Natural killer cell (primary cell): ENCODE measurements at regions of chr9 and their contacts with region 1.

Region 1: DNA sequence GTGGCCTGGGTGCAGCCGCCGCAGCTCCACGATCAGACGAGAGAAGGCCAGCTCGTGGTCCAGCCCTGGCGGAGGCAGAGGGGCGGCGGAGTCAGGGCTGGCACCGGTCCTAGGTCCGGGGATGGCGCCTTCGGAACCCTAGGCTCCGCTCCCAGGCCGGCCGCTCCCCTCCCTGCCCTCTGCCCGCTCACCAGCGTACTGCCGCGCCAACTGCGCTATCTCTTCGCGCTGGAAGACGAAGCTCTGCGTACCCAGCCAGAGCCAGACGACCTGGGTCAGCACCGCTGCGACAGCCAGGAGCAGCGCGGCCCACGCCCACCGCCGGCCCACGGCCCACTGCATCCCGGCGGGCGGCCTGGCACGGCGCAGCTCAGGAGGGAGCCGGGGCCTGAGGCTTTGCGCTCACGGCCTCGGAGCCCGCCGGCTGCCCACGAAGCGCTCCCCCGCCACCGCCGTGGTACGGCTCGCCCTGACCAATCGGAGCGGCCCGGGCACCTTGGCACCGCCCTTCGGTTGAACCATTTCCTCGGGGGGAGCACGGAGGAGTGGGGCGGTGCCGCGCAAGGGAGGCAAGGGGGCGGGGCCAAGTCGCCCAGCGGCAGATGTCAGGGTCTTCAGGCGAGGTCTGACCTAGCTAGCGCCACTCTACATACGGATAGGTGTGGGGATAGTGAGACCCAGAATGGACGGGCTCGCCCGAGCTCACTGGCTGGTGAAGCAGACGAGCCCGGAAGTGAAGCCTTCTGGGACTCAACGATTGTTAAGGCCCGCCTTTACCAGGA is at the start of gene SIGMAR1:
- DNase-seq: peak; percentile 95 to 96
- ATAC-seq: peak; percentile 94 to 98 (median 95)
- H3K4me3 ChIP-seq: peak within 1 kb of the TSS; percentile 82
- H3K4me3 Mint-ChIP-seq: peak within 1 kb of the TSS; percentile 92
- H3K27ac ChIP-seq: peak within 1 kb of the TSS; percentile 91
- H3K27ac Mint-ChIP-seq: peak within 1 kb of the TSS; percentile 95 to 98
- H3K4me1 ChIP-seq: peaks cover 30% of the 10 kb centered on the region
- H3K4me1 Mint-ChIP-seq: peaks cover 17 to 38% of the 10 kb centered on the region in 2 donors
- H3K27me3 ChIP-seq: no peaks in the 10 kb centered on the region
- H3K27me3 Mint-ChIP-seq: no peaks in the 10 kb centered on the region
- CTCF ChIP-seq: no peak
- total RNA-seq, gene SIGMAR1: 22.1 to 29.8 (median 23.0) TPM

Region 2: DNA sequence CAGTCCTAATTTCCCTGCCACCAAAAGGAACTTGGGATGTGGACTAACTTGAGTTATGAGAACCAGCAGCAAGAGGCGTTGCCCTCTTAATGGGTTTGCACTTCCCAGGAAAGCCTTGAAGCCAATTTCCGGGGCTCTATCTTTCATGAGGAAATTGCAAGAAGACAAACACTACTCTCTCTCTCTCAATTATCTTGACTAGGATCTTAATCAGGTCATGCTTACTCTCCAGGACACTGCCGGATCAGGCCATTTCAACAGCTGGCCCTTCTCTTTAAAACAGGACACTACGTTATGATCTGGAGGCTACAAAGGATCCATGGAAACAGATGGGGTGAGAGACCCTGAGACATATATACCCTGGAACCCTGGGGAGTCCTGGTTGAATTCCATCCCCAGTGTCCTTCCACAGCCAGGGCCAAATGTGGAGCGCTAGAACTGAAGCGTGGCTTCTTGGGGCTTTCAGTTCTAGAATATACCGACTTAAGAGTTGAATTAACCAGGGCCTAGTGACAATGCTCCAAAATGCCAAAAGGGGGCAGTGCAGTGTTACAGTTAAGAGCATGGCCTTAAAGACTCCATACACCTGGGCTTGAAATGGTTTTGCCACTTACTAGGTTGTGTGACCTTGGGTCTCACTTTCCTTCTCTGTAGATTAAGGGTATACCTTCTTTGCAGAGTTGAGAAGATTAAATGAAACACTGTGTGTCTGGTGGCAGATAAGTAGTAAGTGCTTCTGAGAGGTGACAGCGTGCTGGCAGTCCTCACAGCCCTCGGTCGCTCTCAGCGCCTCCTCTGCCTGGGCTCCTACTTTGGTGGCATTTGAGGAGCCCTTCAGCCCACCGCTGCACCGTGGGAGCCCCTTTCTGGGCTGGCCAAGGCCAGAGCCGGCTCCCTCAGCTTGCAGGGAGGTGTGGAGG is 200.3 kb before region 1 on chr9:
- intact Hi-C with region 1: loop called (anchors 1 kb)
- DNase-seq: peak; percentile 27 to 88
- ATAC-seq: peak; percentile 89 to 93 (median 92)
- H3K4me3 ChIP-seq: no peak overlapping the region
- H3K4me3 Mint-ChIP-seq: no peak overlapping the region
- H3K27ac ChIP-seq: no peak overlapping the region
- H3K27ac Mint-ChIP-seq: no peak overlapping the region
- H3K4me1 ChIP-seq: peaks cover 3% of the 10 kb centered on the region
- H3K4me1 Mint-ChIP-seq: peaks cover 7 to 12% of the 10 kb centered on the region in 2 donors
- H3K27me3 ChIP-seq: no peaks in the 10 kb centered on the region
- H3K27me3 Mint-ChIP-seq: no peaks in the 10 kb centered on the region
- CTCF ChIP-seq: peak; percentile 73

Region 3: DNA sequence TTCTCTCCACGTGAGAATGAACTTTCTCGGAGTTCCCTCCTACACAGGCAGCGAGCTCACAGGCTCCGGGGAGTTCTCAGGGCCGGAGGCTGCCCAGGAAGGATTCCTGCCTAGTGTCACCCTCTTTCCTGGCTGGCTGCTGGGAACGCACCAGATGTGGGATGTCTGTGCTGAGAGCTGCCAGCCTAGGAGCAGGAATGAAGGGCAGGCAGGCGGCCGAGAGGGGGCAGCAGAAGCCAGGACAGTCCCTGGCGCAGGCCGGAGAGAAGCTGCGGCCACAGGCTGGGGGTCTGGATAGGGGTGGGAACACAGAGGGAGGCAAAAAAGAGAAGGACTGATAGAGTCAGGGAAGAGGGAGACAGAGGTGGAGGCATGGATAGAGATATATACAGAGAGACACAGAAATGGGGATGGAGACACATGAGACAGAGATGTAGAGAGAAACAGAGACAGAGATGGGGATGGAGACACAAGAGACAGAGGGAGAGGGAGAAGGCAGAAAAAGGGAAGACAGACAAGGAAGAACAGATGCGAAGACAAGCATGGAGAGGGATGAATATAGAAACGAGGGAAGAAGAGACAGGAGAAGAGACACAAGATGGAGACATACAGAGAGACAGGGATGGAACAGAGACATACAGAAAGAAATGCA is 89.5 kb before region 1 on chr9:
- intact Hi-C with region 1: loop called (anchors 1 kb)
- DNase-seq: peak in 1 of 2 donors; percentile 42
- ATAC-seq: peak in 2 of 3 donors; percentile 54 to 67
- H3K4me3 ChIP-seq: no peak overlapping the region
- H3K4me3 Mint-ChIP-seq: no peak overlapping the region
- H3K27ac ChIP-seq: no peak overlapping the region
- H3K27ac Mint-ChIP-seq: no peak overlapping the region
- H3K4me1 ChIP-seq: no peaks in the 10 kb centered on the region
- H3K4me1 Mint-ChIP-seq: no peaks in the 10 kb centered on the region
- H3K27me3 ChIP-seq: no peaks in the 10 kb centered on the region
- H3K27me3 Mint-ChIP-seq: peaks cover 0 to 13% of the 10 kb centered on the region in 2 donors
- CTCF ChIP-seq: peak; percentile 53

Region 4: DNA sequence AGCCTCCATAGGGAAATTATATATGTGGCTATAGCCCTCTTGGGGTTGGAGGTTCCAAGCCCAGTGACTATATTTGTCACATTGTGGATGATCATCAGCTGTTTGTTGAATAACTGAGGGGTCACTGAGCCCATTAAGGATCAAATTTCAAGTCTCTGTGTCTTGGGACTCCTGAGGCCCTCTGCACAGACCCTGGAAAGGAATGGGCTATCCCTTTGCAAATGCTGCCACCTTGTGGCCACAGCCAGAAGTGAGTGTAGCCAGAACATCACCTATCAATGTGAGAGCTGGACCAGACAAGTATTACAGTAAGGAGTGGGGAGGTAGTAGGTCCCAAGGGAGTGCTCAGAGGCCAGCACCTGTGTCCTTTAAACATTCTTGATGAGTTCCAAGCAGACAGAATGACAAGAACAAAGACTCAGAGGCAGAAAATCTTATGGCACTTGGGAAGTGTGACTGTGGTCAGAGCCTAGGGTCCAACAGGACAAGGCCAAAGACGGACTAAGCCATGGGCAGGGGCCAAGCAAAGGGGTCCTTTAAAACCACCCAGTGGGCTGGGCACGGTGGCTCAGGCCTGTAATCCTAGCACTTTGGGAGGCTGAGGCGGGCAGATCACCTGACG is 33.8 kb before region 1 on chr9:
- intact Hi-C with region 1: loop called (anchors 5 kb)
- DNase-seq: peak; percentile 76 to 88
- ATAC-seq: peak; percentile 82 to 99 (median 95)
- H3K4me3 ChIP-seq: no peak overlapping the region
- H3K4me3 Mint-ChIP-seq: no peak overlapping the region
- H3K27ac ChIP-seq: no peak overlapping the region
- H3K27ac Mint-ChIP-seq: no peak overlapping the region
- H3K4me1 ChIP-seq: no peaks in the 10 kb centered on the region
- H3K4me1 Mint-ChIP-seq: no peaks in the 10 kb centered on the region
- H3K27me3 ChIP-seq: no peaks in the 10 kb centered on the region
- H3K27me3 Mint-ChIP-seq: peaks cover 0 to 6% of the 10 kb centered on the region in 2 donors
- CTCF ChIP-seq: peak; percentile 88

Region 5: GRCh38 chr9:34611829-34612630 is 25.5 kb before region 1 on chr9 and contains the start of gene RPP25L:
- intact Hi-C with region 1: loop called (anchors 1 kb)
- DNase-seq: peak; percentile 91 to 93
- ATAC-seq: peak; percentile 85 to 97 (median 89)
- H3K4me3 ChIP-seq: peak within 1 kb of the TSS; percentile 72
- H3K4me3 Mint-ChIP-seq: peak within 1 kb of the TSS; percentile 92
- H3K27ac ChIP-seq: peak within 1 kb of the TSS; percentile 96
- H3K27ac Mint-ChIP-seq: peak within 1 kb of the TSS; percentile 92 to 96
- H3K4me1 ChIP-seq: peaks cover 24% of the 10 kb centered on the region
- H3K4me1 Mint-ChIP-seq: peaks cover 29 to 36% of the 10 kb centered on the region in 2 donors
- H3K27me3 ChIP-seq: no peaks in the 10 kb centered on the region
- H3K27me3 Mint-ChIP-seq: no peaks in the 10 kb centered on the region
- CTCF ChIP-seq: no peak
- total RNA-seq, gene RPP25L: 9.3 to 15.0 (median 9.8) TPM

Region 6: GRCh38 chr9:34620061-34620994 is 17.2 kb before region 1 on chr9 and contains the start of gene DCTN3:
- intact Hi-C with region 1: loop called (anchors 1 kb)
- DNase-seq: peak; percentile 85 to 97
- ATAC-seq: peak; percentile 97 to 98 (median 97)
- H3K4me3 ChIP-seq: peak within 1 kb of the TSS; percentile 68
- H3K4me3 Mint-ChIP-seq: peak within 1 kb of the TSS; percentile 95
- H3K27ac ChIP-seq: peak within 1 kb of the TSS; percentile 67
- H3K27ac Mint-ChIP-seq: peak within 1 kb of the TSS; percentile 89 to 95
- H3K4me1 ChIP-seq: peaks cover 30% of the 10 kb centered on the region
- H3K4me1 Mint-ChIP-seq: peaks cover 30 to 37% of the 10 kb centered on the region in 2 donors
- H3K27me3 ChIP-seq: peaks cover 35% of the 10 kb centered on the region
- H3K27me3 Mint-ChIP-seq: peaks cover 19 to 26% of the 10 kb centered on the region in 2 donors
- CTCF ChIP-seq: no peak
- total RNA-seq, gene DCTN3: 135 to 171 (median 147) TPM

Region 7: GRCh38 chr9:34665381-34666250 is 28.1 kb after region 1 on chr9:
- intact Hi-C with region 1: loop called (anchors 2 kb)
- DNase-seq: peak; percentile 82 to 97
- ATAC-seq: peak; percentile 85 to 93 (median 86)
- H3K4me3 ChIP-seq: peak overlapping the region; percentile 70
- H3K4me3 Mint-ChIP-seq: peak overlapping the region; percentile 90
- H3K27ac ChIP-seq: peak overlapping the region; percentile 96
- H3K27ac Mint-ChIP-seq: peak overlapping the region; percentile 86 to 92
- H3K4me1 ChIP-seq: peaks cover 24% of the 10 kb centered on the region
- H3K4me1 Mint-ChIP-seq: peaks cover 11 to 26% of the 10 kb centered on the region in 2 donors
- H3K27me3 ChIP-seq: no peaks in the 10 kb centered on the region
- H3K27me3 Mint-ChIP-seq: no peaks in the 10 kb centered on the region
- CTCF ChIP-seq: no peak

Region 8: GRCh38 chr9:34686231-34686630 is 48.7 kb after region 1 on chr9:
- intact Hi-C with region 1: no loop called
- DNase-seq: no peak
- ATAC-seq: no peak
- H3K4me3 ChIP-seq: no peak overlapping the region
- H3K4me3 Mint-ChIP-seq: no peak overlapping the region
- H3K27ac ChIP-seq: no peak overlapping the region
- H3K27ac Mint-ChIP-seq: no peak overlapping the region
- H3K4me1 ChIP-seq: no peaks in the 10 kb centered on the region
- H3K4me1 Mint-ChIP-seq: peaks cover 8 to 10% of the 10 kb centered on the region in 2 donors
- H3K27me3 ChIP-seq: no peaks in the 10 kb centered on the region
- H3K27me3 Mint-ChIP-seq: peaks cover 0 to 3% of the 10 kb centered on the region in 2 donors
- CTCF ChIP-seq: no peak

Region 9: DNA sequence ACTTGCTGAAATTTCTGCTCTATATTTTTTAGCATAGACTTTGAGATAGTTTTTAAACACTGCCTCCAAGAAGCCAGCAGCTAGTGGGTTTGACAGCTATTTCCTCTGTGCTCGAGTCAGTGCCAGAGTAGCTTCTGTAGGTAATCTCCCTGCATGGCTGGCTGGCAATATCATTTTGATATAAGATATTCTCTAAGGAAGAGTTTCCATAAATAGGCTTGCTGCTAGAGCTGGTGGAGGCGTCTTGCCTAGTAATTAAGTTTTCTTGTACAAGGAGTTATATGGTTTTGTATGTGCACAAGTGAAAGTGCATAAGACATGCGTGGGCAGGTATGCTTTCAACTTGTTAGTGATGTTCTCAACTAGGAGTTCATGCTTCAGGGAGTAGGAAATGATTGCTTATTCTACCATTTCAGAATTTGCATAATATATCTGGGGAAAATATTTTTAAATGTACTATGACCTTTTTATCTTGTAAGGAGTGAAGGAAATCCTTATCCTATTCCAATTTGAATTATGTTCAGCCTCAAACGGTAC is 146.5 kb after region 1 on chr9:
- intact Hi-C with region 1: no loop called
- DNase-seq: no peak
- ATAC-seq: no peak
- H3K4me3 ChIP-seq: no peak overlapping the region
- H3K4me3 Mint-ChIP-seq: no peak overlapping the region
- H3K27ac ChIP-seq: no peak overlapping the region
- H3K27ac Mint-ChIP-seq: no peak overlapping the region
- H3K4me1 ChIP-seq: no peaks in the 10 kb centered on the region
- H3K4me1 Mint-ChIP-seq: no peaks in the 10 kb centered on the region
- H3K27me3 ChIP-seq: peaks cover 3% of the 10 kb centered on the region
- H3K27me3 Mint-ChIP-seq: peaks cover 9 to 28% of the 10 kb centered on the region in 2 donors
- CTCF ChIP-seq: no peak

Region 10: DNA sequence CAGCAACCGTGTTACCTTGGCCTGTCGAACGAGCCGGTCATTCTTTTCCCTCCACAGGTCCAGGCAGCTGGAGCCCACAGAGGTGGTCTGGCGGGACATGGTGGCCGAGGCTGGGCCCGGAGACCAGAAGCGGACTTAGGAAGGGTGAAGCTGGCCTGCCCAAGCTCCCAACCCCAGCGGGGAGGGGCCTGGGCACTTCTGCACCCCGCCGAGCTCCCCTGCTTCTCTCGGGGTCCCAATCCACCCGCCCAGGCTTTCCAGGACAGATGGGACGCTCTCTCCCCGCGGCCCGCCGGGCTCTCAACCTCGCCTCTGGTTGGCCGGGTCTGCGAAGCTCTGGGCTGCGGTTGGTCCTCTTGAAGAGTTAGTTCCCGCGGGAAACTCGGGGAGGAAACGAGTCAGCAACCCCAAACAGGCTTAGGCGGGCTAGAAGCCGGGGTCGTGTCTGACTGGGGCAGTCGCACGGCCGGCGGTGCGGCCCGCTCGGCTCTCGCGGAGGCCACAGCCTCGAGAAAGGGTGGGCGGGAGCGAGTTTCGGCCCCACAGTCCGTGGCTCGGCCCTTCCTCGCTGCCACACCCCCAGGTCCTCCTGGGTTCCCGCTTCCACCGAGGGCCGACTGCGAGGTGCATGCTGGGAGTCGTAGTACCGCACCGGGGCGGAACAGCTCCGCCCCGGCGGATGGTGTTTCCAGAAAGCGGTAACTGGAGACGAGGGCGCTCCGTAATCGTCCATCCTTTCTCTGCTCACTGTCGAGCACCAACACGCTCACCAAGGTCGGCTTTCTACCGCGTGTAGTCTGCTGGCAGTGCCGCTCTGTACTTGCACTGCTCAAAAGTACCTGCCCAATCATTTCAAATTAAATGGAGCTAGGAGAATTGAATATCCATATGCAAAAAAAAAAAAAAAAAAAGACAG is 442.1 kb after region 1 on chr9 and contains the start of gene FANCG:
- intact Hi-C with region 1: no loop called
- DNase-seq: peak; percentile 62 to 87
- ATAC-seq: peak; percentile 93 to 96 (median 95)
- H3K4me3 ChIP-seq: peak within 1 kb of the TSS; percentile 76
- H3K4me3 Mint-ChIP-seq: peak within 1 kb of the TSS; percentile 96
- H3K27ac ChIP-seq: peak within 1 kb of the TSS; percentile 32
- H3K27ac Mint-ChIP-seq: peak within 1 kb of the TSS; percentile 63 to 86
- H3K4me1 ChIP-seq: peaks cover 20% of the 10 kb centered on the region
- H3K4me1 Mint-ChIP-seq: peaks cover 19 to 22% of the 10 kb centered on the region in 2 donors
- H3K27me3 ChIP-seq: no peaks in the 10 kb centered on the region
- H3K27me3 Mint-ChIP-seq: no peaks in the 10 kb centered on the region
- CTCF ChIP-seq: no peak
- total RNA-seq, gene FANCG: 33.9 to 38.9 (median 35.7) TPM